Thyroid gland (tissue), 4 donors: ENCODE measurements at regions of chr19 and their contacts with region 1.

Region 1: DNA sequence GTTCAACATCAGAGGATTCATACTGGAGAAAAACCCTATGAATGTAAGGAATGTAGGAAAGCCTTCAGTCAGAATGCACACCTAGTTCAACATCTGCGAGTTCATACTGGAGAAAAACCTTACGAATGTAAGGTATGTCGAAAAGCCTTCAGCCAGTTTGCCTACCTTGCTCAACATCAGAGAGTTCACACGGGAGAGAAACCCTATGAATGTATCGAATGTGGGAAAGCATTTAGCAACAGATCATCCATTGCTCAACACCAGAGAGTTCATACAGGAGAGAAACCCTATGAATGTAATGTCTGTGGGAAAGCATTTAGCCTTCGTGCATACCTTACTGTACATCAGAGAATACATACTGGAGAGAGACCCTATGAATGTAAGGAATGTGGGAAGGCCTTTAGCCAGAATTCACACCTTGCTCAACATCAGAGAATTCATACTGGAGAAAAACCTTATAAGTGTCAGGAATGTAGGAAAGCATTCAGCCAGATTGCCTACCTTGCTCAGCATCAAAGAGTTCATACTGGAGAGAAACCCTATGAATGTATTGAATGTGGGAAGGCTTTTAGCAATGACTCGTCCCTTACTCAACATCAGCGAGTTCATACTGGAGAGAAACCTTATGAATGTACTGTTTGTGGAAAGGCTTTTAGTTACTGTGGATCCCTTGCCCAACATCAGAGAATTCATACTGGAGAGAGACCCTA is 15.4 kb downstream of the ZNF570 start:
- DNase-seq: no peak
- H3K4me3 ChIP-seq: no peak overlapping the region
- H3K27ac ChIP-seq: no peak overlapping the region
- H3K4me1 ChIP-seq: no peaks in the 10 kb centered on the region
- H3K27me3 ChIP-seq: no peaks in the 10 kb centered on the region
- CTCF ChIP-seq: no peak
- POLR2A ChIP-seq: no peak

Region 2: DNA sequence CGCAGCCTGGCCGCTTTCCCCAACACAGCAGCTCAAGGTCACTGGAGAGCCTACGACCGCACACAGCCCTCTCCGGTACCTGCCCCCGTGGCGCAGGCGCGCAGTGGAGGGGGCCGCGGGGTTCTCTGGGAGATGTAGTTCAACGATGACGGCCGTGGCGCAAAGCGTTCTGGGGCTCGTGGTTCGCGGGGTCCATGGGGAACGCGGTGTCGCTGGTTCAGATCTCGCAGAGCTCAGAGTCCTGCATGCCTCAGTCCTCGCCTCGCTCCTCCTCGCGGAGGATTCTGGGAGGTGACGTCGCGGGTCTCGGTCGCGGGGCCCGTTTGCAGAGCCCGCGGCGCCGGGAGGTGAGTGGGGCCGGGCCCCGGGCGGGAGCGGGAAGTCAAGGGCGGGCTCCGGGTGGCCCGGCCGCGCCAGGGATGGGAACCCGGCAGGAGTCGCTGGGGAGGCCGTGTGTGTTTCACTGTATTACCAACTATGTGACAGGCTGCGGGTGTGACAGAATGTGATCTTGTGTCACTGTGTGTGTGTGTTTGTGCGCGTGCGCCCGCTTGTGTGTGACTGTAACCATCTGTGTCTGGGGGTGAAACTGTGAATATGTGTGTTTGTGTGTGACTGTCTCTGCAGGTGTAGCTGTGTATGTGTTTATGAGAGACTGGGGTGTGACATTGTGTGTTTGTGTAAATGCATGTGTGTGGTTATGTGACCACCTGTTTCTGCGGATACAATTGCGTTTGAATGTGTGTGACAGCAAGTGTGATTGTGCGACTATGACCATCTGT is 113.5 kb before region 1 on chr19 and contains the start of gene ZNF527:
- intact Hi-C with region 1: no loop called
- DNase-seq: peak; percentile 98 to 99
- H3K4me3 ChIP-seq: peak within 1 kb of the TSS; percentile 17 to 53 (median 22)
- H3K27ac ChIP-seq: peak within 1 kb of the TSS; percentile 58 to 83 (median 75)
- H3K4me1 ChIP-seq: peaks cover 5 to 6% of the 10 kb centered on the region in 2 donors
- H3K27me3 ChIP-seq: no peaks in the 10 kb centered on the region
- CTCF ChIP-seq: peak in 1 of 6 experiments; percentile 0
- POLR2A ChIP-seq: peak; percentile 30 to 98
- total RNA-seq, gene ZNF527: 11.6 to 16.4 (median 12.9) TPM

Region 3: GRCh38 chr19:37537391-37537947 is 52.9 kb after region 1 on chr19:
- intact Hi-C with region 1: loop called (anchors 5 kb)
- DNase-seq: no peak
- H3K4me3 ChIP-seq: no peak overlapping the region
- H3K27ac ChIP-seq: no peak overlapping the region
- H3K4me1 ChIP-seq: no peaks in the 10 kb centered on the region
- H3K27me3 ChIP-seq: no peaks in the 10 kb centered on the region
- CTCF ChIP-seq: no peak
- POLR2A ChIP-seq: no peak